GM12878 (cell line): ENCODE measurements at regions of chr19 and their contacts with region 1.

Region 1: DNA sequence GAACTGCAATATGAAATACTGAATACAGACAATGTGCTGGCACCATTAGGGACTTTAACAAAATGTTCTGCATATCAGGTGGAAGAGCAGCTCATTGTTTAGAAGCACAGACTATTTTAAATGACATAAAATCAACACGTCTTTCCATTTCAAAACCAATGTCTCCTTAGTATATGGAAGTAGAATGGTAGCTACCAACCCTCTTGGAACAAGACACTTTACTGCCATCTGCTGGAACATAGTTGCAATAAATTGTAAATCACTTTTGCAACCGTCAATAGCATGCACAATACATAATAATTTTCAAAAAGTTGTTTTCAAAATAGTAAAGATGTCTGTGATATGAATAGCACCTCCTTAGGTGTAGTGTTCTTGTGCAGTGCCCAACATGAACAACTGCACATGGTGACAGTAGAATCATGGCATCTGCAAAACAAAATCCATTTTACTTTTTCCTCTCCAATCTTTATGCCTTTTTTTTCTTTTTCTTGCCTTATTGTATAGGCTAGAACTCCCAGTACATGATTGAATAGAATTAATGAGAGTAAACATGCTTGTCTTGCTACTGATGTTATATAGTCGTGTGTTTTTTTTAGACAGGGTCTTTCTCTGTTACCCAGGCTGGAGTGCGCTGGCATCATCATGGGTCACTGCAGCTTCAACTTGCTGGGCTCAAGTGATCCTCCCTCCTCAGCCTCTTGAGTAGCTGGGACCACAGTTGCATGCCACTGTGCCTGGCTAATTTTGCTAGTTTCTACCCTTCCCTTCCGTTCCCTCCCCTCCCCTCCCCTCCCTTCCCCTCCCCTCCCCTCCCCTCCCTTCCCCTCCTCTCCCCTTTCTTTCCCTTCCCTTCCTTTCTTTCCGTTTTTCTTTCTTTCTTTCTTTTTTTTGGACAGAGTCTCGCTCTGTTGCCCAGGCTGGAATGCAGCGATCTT is 7.8 kb upstream of the LYPD5 start:
- DNase-seq: peak; percentile 24
- ATAC-seq: peak; percentile 87
- H3K4me3 ChIP-seq: no peak overlapping the region
- H3K27ac ChIP-seq: no peak overlapping the region
- H3K4me1 ChIP-seq: no peaks in the 10 kb centered on the region
- H3K27me3 ChIP-seq: no peaks in the 10 kb centered on the region
- CTCF ChIP-seq: peak; percentile 36 to 76 (median 54); a peak in 4 of 6 replicates
- EP300 ChIP-seq: no peak
- POLR2A ChIP-seq: no peak
- RAD21 ChIP-seq: peak; percentile 78

Region 2: GRCh38 chr19:43619262-43620060 is 190.6 kb before region 1 on chr19 and contains the start of gene ZNF428:
- CTCF ChIA-PET with region 1: no interaction called
- POLR2A ChIA-PET with region 1: no interaction called
- RAD21 ChIA-PET with region 1: no interaction called
- SMC1A ChIA-PET with region 1: no interaction called
- in situ Hi-C with region 1: no loop called
- intact Hi-C with region 1: no loop called
- DNase-seq: peak; percentile 67
- ATAC-seq: peak; percentile 95
- H3K4me3 ChIP-seq: peak within 1 kb of the TSS; percentile 82
- H3K27ac ChIP-seq: peak within 1 kb of the TSS; percentile 77
- H3K4me1 ChIP-seq: peaks cover 6% of the 10 kb centered on the region; the same call in 1 of the 2 replicates
- H3K27me3 ChIP-seq: no peaks in the 10 kb centered on the region
- CTCF ChIP-seq: no peak
- EP300 ChIP-seq: no peak
- POLR2A ChIP-seq: peak; percentile 87
- RAD21 ChIP-seq: no peak
- polyA plus RNA-seq, gene ZNF428: 0.27 to 0.38 TPM

Region 3: GRCh38 chr19:43743022-43743421 is 67.0 kb before region 1 on chr19:
- CTCF ChIA-PET with region 1: interaction called, 74 read pairs
- POLR2A ChIA-PET with region 1: interaction called, 3 read pairs
- RAD21 ChIA-PET with region 1: interaction called, 36 read pairs
- SMC1A ChIA-PET with region 1: interaction called, 28 read pairs
- in situ Hi-C with region 1: no loop called
- intact Hi-C with region 1: loop called (anchors 1 kb)
- DNase-seq: no peak
- ATAC-seq: no peak
- H3K4me3 ChIP-seq: no peak overlapping the region
- H3K27ac ChIP-seq: no peak overlapping the region
- H3K4me1 ChIP-seq: peaks cover 19% of the 10 kb centered on the region
- H3K27me3 ChIP-seq: no peaks in the 10 kb centered on the region
- CTCF ChIP-seq: no peak
- EP300 ChIP-seq: no peak
- POLR2A ChIP-seq: no peak
- RAD21 ChIP-seq: no peak

Region 4: GRCh38 chr19:43765109-43765876 is 44.7 kb before region 1 on chr19:
- CTCF ChIA-PET with region 1: interaction called, 4 read pairs
- POLR2A ChIA-PET with region 1: interaction called, 3 read pairs
- RAD21 ChIA-PET with region 1: interaction called, 13 read pairs
- SMC1A ChIA-PET with region 1: interaction called, 3 read pairs
- in situ Hi-C with region 1: no loop called
- intact Hi-C with region 1: no loop called
- DNase-seq: peak; percentile 95
- ATAC-seq: peak; percentile 81
- H3K4me3 ChIP-seq: peak overlapping the region; percentile 14; the same call in 1 of the 2 replicates
- H3K27ac ChIP-seq: peak overlapping the region; percentile 100
- H3K4me1 ChIP-seq: peaks cover 57% of the 10 kb centered on the region
- H3K27me3 ChIP-seq: no peaks in the 10 kb centered on the region
- CTCF ChIP-seq: no peak
- EP300 ChIP-seq: peak; percentile 96 to 99
- POLR2A ChIP-seq: peak; percentile 62
- RAD21 ChIP-seq: no peak

Region 5: DNA sequence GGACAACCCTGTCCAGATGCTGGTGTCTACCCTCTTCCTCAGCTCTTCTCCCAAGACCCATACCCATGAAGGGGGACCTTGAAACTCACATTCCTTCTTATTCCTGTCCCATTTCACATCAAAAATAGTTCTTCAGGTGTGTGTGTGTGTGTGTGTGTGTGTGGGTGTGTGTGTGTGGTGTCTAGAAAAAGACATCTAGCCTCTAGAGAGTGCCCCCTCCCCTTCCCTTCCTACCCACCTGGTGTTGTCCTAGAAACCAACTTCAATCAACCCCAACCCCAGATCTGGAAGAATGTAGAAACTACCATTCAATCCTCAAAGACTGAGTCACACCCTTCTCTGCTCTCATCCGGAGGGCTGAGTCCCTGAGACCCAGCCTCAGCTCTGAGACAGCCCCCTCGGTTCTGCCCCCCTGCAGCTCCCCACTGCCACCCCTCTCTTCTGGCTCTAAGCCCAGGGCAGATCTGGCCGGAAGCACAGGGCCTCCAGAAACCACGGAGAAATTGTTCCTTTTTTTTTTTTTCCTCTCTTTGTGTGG is 32.8 kb before region 1 on chr19:
- CTCF ChIA-PET with region 1: interaction called, 6 read pairs
- POLR2A ChIA-PET with region 1: interaction called, 3 read pairs
- RAD21 ChIA-PET with region 1: interaction called, 10 read pairs
- SMC1A ChIA-PET with region 1: interaction called, 4 read pairs
- in situ Hi-C with region 1: no loop called
- intact Hi-C with region 1: no loop called
- DNase-seq: no peak
- ATAC-seq: peak; percentile 29
- H3K4me3 ChIP-seq: peak overlapping the region; percentile 100
- H3K27ac ChIP-seq: peak overlapping the region; percentile 95
- H3K4me1 ChIP-seq: peaks cover 43% of the 10 kb centered on the region
- H3K27me3 ChIP-seq: no peaks in the 10 kb centered on the region
- CTCF ChIP-seq: no peak
- EP300 ChIP-seq: no peak
- POLR2A ChIP-seq: no peak
- RAD21 ChIP-seq: no peak

Region 6: GRCh38 chr19:43784981-43785808 is 24.8 kb before region 1 on chr19:
- CTCF ChIA-PET with region 1: interaction called, 12 read pairs
- POLR2A ChIA-PET with region 1: interaction called, 3 read pairs
- RAD21 ChIA-PET with region 1: interaction called, 10 read pairs
- SMC1A ChIA-PET with region 1: interaction called, 5 read pairs
- in situ Hi-C with region 1: no loop called
- intact Hi-C with region 1: no loop called
- DNase-seq: no peak
- ATAC-seq: peak; percentile 70
- H3K4me3 ChIP-seq: no peak overlapping the region
- H3K27ac ChIP-seq: peak overlapping the region; percentile 74
- H3K4me1 ChIP-seq: peaks cover 49% of the 10 kb centered on the region
- H3K27me3 ChIP-seq: no peaks in the 10 kb centered on the region
- CTCF ChIP-seq: peak; percentile 98 to 100 (median 100); a peak in 5 of 6 replicates
- EP300 ChIP-seq: no peak
- POLR2A ChIP-seq: no peak
- RAD21 ChIP-seq: peak; percentile 95

Region 7: DNA sequence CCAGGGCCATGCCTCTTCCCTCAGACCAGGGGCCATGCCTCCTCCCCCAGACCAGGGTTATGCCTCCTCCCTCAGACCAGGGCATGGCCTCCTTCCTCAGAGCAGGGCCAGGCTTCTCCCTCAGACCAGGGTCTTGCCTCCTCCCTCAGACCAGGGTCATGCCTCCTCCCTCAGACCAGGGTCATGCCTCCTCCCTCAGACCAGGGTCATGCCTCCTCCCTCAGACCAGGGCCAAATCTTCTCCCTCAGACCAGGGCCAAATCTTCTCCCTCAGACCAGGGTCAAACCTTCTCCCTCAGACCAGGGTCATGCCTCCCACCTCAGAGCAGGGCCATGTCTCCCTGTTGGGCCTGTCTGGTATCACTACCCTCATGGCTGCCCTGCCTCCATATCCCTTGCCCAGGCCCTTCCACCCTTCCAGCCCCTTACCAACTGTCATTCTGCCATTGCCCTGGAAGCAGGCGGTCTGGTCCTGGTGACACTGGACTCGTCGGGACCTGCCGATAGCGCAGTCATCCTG is 11.9 kb before region 1 on chr19:
- CTCF ChIA-PET with region 1: interaction called, 14 read pairs
- POLR2A ChIA-PET with region 1: no interaction called
- RAD21 ChIA-PET with region 1: no interaction called
- SMC1A ChIA-PET with region 1: interaction called, 8 read pairs
- in situ Hi-C with region 1: no loop called
- intact Hi-C with region 1: no loop called
- DNase-seq: no peak
- ATAC-seq: no peak
- H3K4me3 ChIP-seq: peak overlapping the region; percentile 60; the same call in 1 of the 2 replicates
- H3K27ac ChIP-seq: no peak overlapping the region
- H3K4me1 ChIP-seq: peaks cover 4% of the 10 kb centered on the region
- H3K27me3 ChIP-seq: no peaks in the 10 kb centered on the region
- CTCF ChIP-seq: no peak
- EP300 ChIP-seq: no peak
- POLR2A ChIP-seq: no peak
- RAD21 ChIP-seq: no peak